ENCODE measurements at regions of chr9 and their contacts with region 1.

Region 1: DNA sequence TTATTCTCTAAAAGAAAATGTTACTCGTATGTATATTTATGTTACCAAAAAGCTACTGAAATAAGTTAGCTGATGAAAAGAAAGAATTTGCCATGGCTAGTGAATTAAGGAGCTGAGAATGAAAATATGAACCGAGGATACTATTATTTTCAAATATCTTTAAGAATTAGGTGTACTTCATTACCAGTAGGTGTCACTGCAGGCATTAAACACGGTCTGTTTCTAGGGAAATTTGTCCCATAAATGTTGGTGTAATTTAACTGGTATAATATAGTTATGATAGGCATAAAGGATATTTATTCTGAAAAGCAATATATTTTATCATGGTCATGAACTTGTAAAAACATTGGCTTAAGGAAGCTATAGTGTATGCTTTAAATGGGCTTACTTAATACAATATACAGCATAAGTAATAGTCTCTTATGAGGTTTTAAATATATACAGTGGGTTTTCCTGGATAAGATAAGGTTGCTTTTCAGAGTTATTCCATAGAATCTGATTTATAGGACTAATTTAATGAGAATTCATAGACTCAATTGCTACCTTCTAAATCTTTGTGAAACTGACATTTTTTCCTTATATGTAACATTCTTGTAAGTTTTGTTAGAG is 72.4 kb upstream of the MPDZ start:
- DNase-seq: no peak
- H3K4me3 Mint-ChIP-seq: no peak overlapping the region
- H3K27ac Mint-ChIP-seq: no peak overlapping the region
- H3K4me1 Mint-ChIP-seq: no peaks in the 10 kb centered on the region
- H3K27me3 Mint-ChIP-seq: no peaks in the 10 kb centered on the region

Region 2: GRCh38 chr9:13410566-13411031 is 58.7 kb after region 1 on chr9:
- CTCF ChIA-PET with region 1: no interaction called
- POLR2A ChIA-PET with region 1: no interaction called
- intact Hi-C with region 1: no loop called
- DNase-seq: no peak
- H3K4me3 Mint-ChIP-seq: no peak overlapping the region
- H3K27ac Mint-ChIP-seq: no peak overlapping the region
- H3K4me1 Mint-ChIP-seq: no peaks in the 10 kb centered on the region
- H3K27me3 Mint-ChIP-seq: no peaks in the 10 kb centered on the region

Region 3: DNA sequence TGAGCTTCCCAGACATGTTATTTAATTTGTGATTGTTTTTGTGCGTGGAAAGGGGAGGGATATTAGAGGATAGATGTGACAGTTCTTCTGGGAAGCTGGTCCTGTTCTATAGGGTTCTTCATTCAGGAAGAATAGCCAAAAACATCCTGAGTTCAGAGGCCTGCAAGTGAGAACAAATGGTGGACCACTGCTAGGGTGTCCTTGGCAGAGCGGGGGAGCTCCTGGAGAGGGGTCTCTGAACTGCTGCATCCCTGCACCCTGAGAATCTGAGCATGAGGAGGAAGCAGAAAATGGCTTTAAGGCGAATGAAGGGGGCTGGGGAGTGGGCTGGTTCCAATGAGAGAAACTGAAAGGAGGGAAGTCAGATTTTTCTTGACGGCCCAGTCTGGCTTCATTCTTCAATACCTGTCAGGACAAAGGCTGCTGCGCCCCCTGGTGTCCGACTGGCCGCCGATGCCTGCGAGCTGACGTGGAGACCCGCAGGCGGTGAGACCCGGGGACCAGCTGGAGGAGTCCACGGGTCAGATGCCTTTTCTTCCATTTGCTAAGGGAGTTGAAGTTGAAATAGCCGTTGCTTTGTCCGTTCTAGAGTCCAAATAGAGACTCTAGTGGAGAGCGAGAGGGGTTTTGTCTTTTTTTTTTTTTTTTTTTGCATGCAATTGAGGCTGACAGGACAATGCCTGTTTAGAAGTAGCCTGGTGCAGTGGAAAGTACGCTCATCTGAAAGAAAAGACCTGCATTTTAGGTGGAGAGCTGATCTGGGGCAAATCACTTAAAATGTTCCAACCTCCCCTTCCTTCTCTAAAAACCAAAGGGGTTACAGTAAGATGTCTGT is 1001.6 kb after region 1 on chr9:
- CTCF ChIA-PET with region 1: interaction called, 3 read pairs
- POLR2A ChIA-PET with region 1: no interaction called
- intact Hi-C with region 1: loop called (anchors 5 kb)
- DNase-seq: peak; percentile 85
- H3K4me3 Mint-ChIP-seq: no peak overlapping the region
- H3K27ac Mint-ChIP-seq: no peak overlapping the region
- H3K4me1 Mint-ChIP-seq: peaks cover 4% of the 10 kb centered on the region
- H3K27me3 Mint-ChIP-seq: peaks cover 59% of the 10 kb centered on the region